Spleen (tissue), 13 donors: ENCODE measurements at regions of chr13 and their contacts with region 1.

Region 1: GRCh38 chr13:27620377-27621115 is at the start of gene LNX2:
- DNase-seq: peak; percentile 99
- H3K4me3 ChIP-seq: peak within 1 kb of the TSS; percentile 81 to 98 (median 91)
- H3K27ac ChIP-seq: peak within 1 kb of the TSS; percentile 91 to 98 (median 96)
- H3K4me1 ChIP-seq: peaks cover 18 to 70% (median 49%) of the 10 kb centered on the region in 6 donors
- H3K27me3 ChIP-seq: no peaks in the 10 kb centered on the region
- CTCF ChIP-seq: peak in 2 of 11 experiments; percentile 14 to 42
- POLR2A ChIP-seq: no peak
- total RNA-seq, gene LNX2: 6.5 to 8.8 (median 6.8) TPM

Region 2: GRCh38 chr13:27449936-27450828 is 170.4 kb before region 1 on chr13 and contains the start of gene MTIF3:
- intact Hi-C with region 1: loop called (anchors 10 kb)
- DNase-seq: peak; percentile 99
- H3K4me3 ChIP-seq: peak within 1 kb of the TSS; percentile 63 to 86 (median 72)
- H3K27ac ChIP-seq: peak within 1 kb of the TSS; percentile 96 to 100 (median 99)
- H3K4me1 ChIP-seq: peaks cover 27 to 72% (median 57%) of the 10 kb centered on the region in 6 donors
- H3K27me3 ChIP-seq: no peaks in the 10 kb centered on the region
- CTCF ChIP-seq: peak in 6 of 11 experiments; percentile 18 to 39 (median 28)
- POLR2A ChIP-seq: peak in 2 of 3 donors; percentile 7 to 41
- total RNA-seq, gene MTIF3: 38.1 to 92.1 (median 46.8) TPM